ENCODE measurements at regions of chr7 and their contacts with region 1.

Region 1: GRCh38 chr7:78111386-78111785 is 312.8 kb downstream of the PHTF2 start:
- DNase-seq: no peak
- H3K4me3 ChIP-seq: no peak overlapping the region
- H3K27ac ChIP-seq: no peak overlapping the region
- H3K4me1 ChIP-seq: no peaks in the 10 kb centered on the region
- H3K27me3 ChIP-seq: peaks cover 3% of the 10 kb centered on the region
- CTCF ChIP-seq: no peak

Region 2: GRCh38 chr7:77391230-77391629 is 720.2 kb before region 1 on chr7:
- CTCF ChIA-PET with region 1: no interaction called
- dilution Hi-C with region 1: no loop called
- in situ Hi-C with region 1: no loop called
- intact Hi-C with region 1: no loop called
- DNase-seq: no peak
- H3K4me3 ChIP-seq: no peak overlapping the region
- H3K27ac ChIP-seq: no peak overlapping the region
- H3K4me1 ChIP-seq: peaks cover 22% of the 10 kb centered on the region
- H3K27me3 ChIP-seq: no peaks in the 10 kb centered on the region
- CTCF ChIP-seq: no peak

Region 3: DNA sequence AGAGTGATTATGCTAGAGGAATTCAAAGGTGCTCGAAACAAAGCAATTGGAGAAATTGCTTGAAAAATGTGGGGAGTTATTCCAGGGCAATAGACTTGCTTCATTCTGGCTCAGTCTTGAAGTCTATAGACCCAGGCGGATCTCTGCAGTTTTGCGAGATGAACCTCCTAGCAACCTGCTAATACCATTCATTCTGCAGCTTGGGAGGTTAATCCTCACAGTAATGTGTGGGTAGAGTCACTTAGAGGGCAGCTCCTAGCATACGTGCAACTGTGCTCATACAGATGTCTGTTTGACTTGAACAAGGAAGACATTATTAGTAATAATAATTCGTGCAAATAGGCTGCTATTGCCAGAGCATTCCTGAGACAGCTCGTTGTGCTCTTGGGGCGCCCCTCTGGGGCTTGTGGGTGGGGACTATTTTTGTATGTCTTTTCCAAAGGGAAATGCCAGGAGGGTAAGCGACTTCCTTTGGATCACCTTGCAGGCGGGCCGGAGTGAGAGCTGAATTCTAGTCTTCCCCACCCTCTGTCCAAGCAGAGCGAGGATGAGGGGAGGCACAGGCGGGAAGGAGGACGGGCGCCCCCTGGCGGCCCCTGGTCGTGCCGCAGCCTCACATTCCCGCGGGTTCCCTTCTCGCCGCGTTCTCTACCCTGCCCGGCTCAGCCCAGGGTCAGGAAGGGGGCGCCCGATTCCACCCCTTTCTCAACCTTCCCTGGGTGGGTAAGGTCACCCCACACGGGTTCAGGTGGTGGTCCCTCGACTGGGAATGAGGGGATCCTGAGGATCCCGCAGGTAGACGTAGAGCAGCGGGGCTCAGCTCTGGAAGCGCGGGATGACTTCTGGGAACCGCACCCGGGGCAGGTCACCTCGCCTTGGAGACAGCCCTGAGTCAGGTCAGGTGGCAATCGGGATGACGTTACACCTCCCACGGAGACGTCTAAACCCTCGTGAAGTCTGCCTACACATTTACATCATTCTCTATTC is 71.3 kb before region 1 on chr7:
- CTCF ChIA-PET with region 1: no interaction called
- dilution Hi-C with region 1: loop called (anchors 5 kb)
- in situ Hi-C with region 1: no loop called
- intact Hi-C with region 1: no loop called
- DNase-seq: no peak
- H3K4me3 ChIP-seq: no peak overlapping the region
- H3K27ac ChIP-seq: no peak overlapping the region
- H3K4me1 ChIP-seq: no peaks in the 10 kb centered on the region
- H3K27me3 ChIP-seq: no peaks in the 10 kb centered on the region
- CTCF ChIP-seq: peak; percentile 35 to 58

Region 4: DNA sequence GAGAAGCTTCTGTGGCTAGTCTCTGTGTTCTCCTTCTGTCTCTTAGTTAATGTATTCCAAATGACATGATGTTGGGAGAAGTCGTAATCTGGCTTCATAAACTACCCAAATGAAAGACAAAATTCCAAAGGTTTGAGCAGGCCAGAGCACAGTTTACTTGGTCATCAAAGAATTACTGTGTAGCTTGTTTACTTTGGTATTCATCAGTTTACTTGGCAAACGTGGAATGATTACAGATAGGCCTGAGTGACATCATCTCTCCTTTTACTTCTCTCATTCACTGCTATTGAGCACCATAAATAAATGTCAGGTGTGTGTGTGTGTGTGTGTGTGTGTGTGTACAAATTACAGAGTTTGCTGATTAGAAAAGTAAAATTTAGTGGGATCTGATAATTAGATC is 14.5 kb after region 1 on chr7:
- CTCF ChIA-PET with region 1: no interaction called
- dilution Hi-C with region 1: no loop called
- in situ Hi-C with region 1: no loop called
- intact Hi-C with region 1: no loop called
- DNase-seq: no peak
- H3K4me3 ChIP-seq: no peak overlapping the region
- H3K27ac ChIP-seq: no peak overlapping the region
- H3K4me1 ChIP-seq: no peaks in the 10 kb centered on the region
- H3K27me3 ChIP-seq: peaks cover 3% of the 10 kb centered on the region
- CTCF ChIP-seq: no peak

Region 5: DNA sequence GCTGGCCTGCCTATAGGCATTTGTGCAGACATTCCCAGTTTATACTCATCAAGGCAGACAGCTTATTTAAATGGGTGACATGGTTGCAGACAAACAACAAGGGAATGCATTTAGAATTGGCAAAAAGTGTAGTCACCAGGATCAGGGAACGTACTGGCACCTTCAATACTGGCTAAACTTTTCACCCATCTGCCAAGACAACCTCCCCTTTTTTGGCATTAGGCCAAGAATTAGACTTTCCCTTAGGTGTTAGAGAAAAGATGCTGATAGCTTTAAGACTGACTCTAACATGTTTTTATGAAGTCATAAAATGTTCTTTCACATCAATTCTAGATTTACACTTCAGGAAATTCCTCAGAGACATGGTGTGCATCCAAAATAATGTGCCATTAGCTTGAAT is 53.1 kb after region 1 on chr7:
- CTCF ChIA-PET with region 1: no interaction called
- dilution Hi-C with region 1: no loop called
- in situ Hi-C with region 1: no loop called
- intact Hi-C with region 1: no loop called
- DNase-seq: no peak
- H3K4me3 ChIP-seq: no peak overlapping the region
- H3K27ac ChIP-seq: no peak overlapping the region
- H3K4me1 ChIP-seq: no peaks in the 10 kb centered on the region
- H3K27me3 ChIP-seq: no peaks in the 10 kb centered on the region
- CTCF ChIP-seq: no peak

Measured in mammary epithelial cell (primary cell).